Calu3 (cell line): ENCODE measurements at regions of chr9 and their contacts with region 1.

Region 1: GRCh38 chr9:27053369-27054022 is 48.0 kb upstream of the LRRC19 start:
- DNase-seq: no peak
- H3K4me3 Mint-ChIP-seq: no peak overlapping the region
- H3K27ac Mint-ChIP-seq: no peak overlapping the region
- H3K4me1 Mint-ChIP-seq: peaks cover 17% of the 10 kb centered on the region
- H3K27me3 Mint-ChIP-seq: no peaks in the 10 kb centered on the region
- CTCF ChIP-seq: no peak

Region 2: GRCh38 chr9:27108981-27109541 is 55.6 kb after region 1 on chr9 and contains the start of gene TEK:
- CTCF ChIA-PET with region 1: no interaction called
- intact Hi-C with region 1: loop called (anchors 10 kb)
- DNase-seq: no peak
- H3K4me3 Mint-ChIP-seq: no peak within 1 kb of the TSS
- H3K27ac Mint-ChIP-seq: no peak within 1 kb of the TSS
- H3K4me1 Mint-ChIP-seq: peaks cover 8% of the 10 kb centered on the region
- H3K27me3 Mint-ChIP-seq: no peaks in the 10 kb centered on the region
- CTCF ChIP-seq: no peak
- total RNA-seq, gene TEK: not detected in 2 replicates